Esophagus muscularis mucosa (tissue), 4 donors: ENCODE measurements at regions of chr15 and their contacts with region 1.

Region 1: DNA sequence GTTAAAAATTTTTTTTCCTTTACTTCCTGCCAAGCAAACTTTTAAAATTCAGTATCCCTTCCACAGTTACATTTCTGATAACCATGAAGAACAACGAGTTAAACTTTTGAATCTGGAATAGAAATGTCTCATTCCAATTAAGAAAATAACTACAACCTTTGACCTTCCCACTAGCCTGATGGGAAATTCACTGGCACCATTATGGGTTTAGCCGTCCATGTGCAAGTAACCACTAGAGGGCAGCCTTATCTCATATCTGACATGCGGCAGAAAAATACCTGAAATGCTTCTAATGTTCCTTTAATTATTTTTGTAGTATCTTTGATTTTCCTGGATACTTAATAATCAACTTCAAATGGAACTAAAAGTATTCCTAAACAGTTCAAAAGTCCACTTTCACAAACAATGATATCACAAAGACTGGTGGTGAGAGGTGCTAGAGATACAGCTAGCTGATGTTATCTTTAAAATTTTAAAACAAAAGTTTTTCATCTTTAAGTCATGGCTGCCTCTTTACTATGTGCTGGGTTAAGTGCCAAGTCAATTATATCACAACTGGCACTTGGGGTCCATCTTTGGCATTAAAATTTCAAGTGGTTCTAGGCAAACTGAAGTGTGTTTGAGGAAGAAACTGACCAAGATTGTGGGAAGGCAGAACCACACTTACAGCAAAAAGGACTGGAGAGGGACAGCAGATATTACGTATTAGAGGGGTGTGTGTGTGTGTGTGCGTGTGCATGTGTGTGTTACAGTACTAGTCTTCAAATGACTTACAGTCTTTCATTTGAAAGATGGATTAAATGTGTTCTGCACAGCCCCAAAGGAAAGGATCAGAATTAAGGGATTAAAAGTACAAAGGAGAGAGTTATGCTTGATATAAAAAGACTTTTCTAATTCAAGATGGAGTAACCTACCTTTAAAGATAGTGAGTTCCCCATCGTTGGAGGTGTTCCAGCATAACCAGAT is 107.1 kb upstream of the ICE2 start:
- DNase-seq: no peak
- H3K4me3 ChIP-seq: no peak overlapping the region
- H3K27ac ChIP-seq: peak overlapping the region; percentile 1 to 34 (median 7)
- H3K4me1 ChIP-seq: peaks cover 32 to 82% (median 64%) of the 10 kb centered on the region in 4 donors
- H3K27me3 ChIP-seq: no peaks in the 10 kb centered on the region
- CTCF ChIP-seq: peak; percentile 89 to 92 (median 89)
- EP300 ChIP-seq: no peak
- POLR2A ChIP-seq: no peak

Region 2: DNA sequence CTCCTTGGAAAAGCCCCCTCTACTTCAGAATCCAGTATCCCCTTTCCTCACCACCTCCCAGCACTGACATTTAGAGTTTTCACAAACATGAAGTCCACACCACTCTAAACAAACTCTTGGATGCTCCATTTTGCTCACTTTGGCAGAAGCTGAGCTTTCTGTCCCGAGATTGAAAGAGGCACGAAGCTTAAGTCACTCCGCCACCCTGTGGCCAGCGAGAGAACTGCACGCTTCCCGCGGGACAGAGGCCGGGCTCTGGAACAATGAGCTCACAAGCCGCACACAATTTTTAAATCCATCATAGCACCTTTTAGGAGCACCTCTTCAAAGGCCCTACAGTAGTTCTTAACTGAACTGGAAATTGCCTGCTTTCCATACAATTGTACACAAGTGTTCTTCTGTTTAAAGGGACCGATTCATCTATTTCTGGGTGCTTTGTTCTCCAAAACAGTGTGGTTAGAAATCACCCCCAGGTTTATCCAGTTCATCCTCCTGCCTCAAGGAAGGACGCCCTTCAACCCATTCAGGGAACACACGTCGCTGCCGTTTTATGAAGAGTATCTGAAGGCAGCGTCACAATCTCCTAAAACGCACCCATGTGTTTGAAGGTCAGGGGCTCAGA is 1248.2 kb after region 1 on chr15:
- intact Hi-C with region 1: loop called (anchors 5 kb)
- DNase-seq: peak; percentile 96
- H3K4me3 ChIP-seq: no peak overlapping the region
- H3K27ac ChIP-seq: no peak overlapping the region
- H3K4me1 ChIP-seq: peaks cover 0 to 22% (median 8%) of the 10 kb centered on the region in 4 donors
- H3K27me3 ChIP-seq: no peaks in the 10 kb centered on the region
- CTCF ChIP-seq: peak; percentile 91 to 100 (median 92)
- EP300 ChIP-seq: no peak
- POLR2A ChIP-seq: no peak